HepG2 (cell line): ENCODE measurements at regions of chr1 and their contacts with region 1.

Region 1: GRCh38 chr1:45870500-45870899 is 67.1 kb downstream of the MAST2 start:
- DNase-seq: no peak
- ATAC-seq: no peak
- H3K4me3 ChIP-seq: peak overlapping the region in 1 of 3 experiments; percentile 16; a peak in 1 of 6 replicates
- H3K27ac ChIP-seq: peak overlapping the region; percentile 97
- H3K4me1 ChIP-seq: peaks cover 88% of the 10 kb centered on the region
- H3K27me3 ChIP-seq: no peaks in the 10 kb centered on the region
- CTCF ChIP-seq: no peak
- EP300 ChIP-seq: no peak
- POLR2A ChIP-seq: no peak
- RAD21 ChIP-seq: no peak

Region 2: GRCh38 chr1:45854724-45855123 is 15.8 kb before region 1 on chr1:
- CTCF ChIA-PET with region 1: no interaction called
- POLR2A ChIA-PET with region 1: no interaction called
- in situ Hi-C with region 1: no loop called
- intact Hi-C with region 1: loop called (anchors 2 kb)
- DNase-seq: peak; percentile 23
- ATAC-seq: peak; percentile 79
- H3K4me3 ChIP-seq: no peak overlapping the region
- H3K27ac ChIP-seq: peak overlapping the region; percentile 14
- H3K4me1 ChIP-seq: peaks cover 36% of the 10 kb centered on the region
- H3K27me3 ChIP-seq: no peaks in the 10 kb centered on the region
- CTCF ChIP-seq: peak; percentile 29; the same call in 1 of the 2 replicates
- EP300 ChIP-seq: no peak
- POLR2A ChIP-seq: no peak
- RAD21 ChIP-seq: 0 out of 2 replicates have a peak, but pooled peaks have one; percentile 26